ENCODE measurements at regions of chr14 and their contacts with region 1.

Region 1: DNA sequence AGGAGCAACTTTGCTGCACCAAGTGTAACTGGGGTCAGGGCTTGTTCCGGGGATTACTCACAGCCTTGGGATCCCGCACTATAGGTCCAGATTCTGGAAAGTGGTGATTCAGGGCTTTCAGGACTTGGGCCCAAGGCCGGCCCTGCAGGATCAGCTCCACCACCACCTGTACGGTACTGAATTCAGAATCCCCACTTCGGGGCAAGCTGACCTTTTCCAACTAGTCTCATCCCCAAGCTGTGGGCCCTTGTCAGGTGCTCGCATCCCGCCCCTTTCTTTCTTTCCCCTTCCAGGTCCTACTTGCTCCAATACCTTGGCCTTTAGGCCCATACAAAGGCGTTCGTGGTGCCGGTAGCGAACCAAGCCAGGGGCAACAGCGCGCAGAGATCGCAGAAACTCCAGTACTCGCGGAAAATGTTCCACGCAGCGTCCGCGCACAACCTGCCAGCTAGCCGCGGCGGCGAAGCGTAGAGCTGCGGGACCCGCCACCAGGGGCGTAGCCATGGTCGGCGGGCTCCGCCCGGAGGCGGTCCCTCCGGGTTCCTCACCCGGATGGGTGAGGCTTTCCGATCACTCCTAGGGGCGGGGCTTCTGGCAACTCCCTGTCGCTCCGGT is 487 bp downstream of the TINF2 start:
- DNase-seq: peak; percentile 93 to 94 (median 93)
- H3K4me3 ChIP-seq: peak overlapping the region; percentile 91
- H3K27ac ChIP-seq: peak overlapping the region; percentile 92 to 96
- H3K4me1 ChIP-seq: peaks cover 7% of the 10 kb centered on the region
- H3K27me3 ChIP-seq: no peaks in the 10 kb centered on the region
- CTCF ChIP-seq: peak; percentile 73 to 81 (median 79)
- EP300 ChIP-seq: no peak
- POLR2A ChIP-seq: no peak

Region 2: GRCh38 chr14:24171422-24172260 is 70.3 kb before region 1 on chr14 and contains the start of gene REC8:
- intact Hi-C with region 1: no loop called
- DNase-seq: peak; percentile 45 to 85 (median 67)
- H3K4me3 ChIP-seq: peak within 1 kb of the TSS; percentile 17
- H3K27ac ChIP-seq: no peak within 1 kb of the TSS
- H3K4me1 ChIP-seq: peaks cover 8% of the 10 kb centered on the region
- H3K27me3 ChIP-seq: no peaks in the 10 kb centered on the region
- CTCF ChIP-seq: no peak
- EP300 ChIP-seq: no peak
- POLR2A ChIP-seq: no peak
- total RNA-seq, gene REC8: 6.2 to 75.4 (median 13.5) TPM

Region 3: DNA sequence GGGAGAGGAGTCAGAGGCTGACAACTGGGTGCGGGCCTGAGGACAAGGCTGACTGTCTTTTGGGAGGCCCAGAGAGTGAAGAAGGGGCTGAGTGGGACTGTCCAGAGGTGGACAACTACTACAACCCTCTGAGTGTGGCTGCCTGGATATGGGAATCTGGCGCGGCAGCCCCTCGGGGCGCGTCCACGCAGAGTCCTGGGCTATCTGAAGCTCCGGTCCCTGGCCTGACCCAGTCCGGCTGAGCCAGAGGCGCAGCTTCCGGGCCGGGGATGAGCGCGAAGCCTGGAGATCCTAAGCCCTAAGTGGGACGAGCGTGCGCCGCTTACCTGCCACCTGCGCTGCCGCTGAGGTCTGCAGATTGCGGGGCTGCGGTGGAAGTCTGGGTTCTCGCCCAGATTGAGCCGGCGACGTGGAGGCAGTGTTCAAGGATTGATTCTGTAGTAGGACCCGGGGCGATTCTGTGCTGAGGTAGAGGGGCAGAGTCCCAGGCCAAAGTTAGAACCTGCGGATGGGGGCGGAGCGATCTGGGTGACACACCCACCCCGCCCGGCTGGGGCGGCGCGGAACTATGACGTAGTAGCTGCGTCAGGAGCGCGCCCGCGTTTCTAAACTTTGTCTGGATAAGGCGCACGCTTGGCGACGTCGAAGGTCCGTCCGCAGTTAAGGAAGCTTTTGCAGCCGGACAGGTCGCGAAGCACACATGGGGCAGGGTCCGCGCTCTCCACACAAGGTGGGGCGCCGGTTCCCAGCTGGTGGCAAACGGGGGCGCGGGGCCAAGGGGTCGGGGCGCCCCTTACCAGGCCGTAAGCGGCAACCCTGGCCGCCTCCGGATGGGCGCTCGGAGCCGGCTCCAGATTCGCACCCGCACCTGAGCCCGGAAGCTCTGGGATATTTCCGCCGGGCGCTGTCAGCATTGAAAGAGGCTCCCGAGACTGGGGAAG is 57.6 kb after region 1 on chr14 and contains the starts of genes DHRS1 and NOP9:
- intact Hi-C with region 1: loop called in 1 of 4 experiments (anchors 5 kb)
- DNase-seq: peak; percentile 87 to 96 (median 93)
- H3K4me3 ChIP-seq: peak within 1 kb of the TSS; percentile 93
- H3K27ac ChIP-seq: peak within 1 kb of the TSS; percentile 33 to 65
- H3K4me1 ChIP-seq: peaks cover 6% of the 10 kb centered on the region
- H3K27me3 ChIP-seq: no peaks in the 10 kb centered on the region
- CTCF ChIP-seq: no peak
- EP300 ChIP-seq: no peak
- POLR2A ChIP-seq: peak; percentile 76
- total RNA-seq, gene DHRS1: 16.0 to 35.6 (median 21.4) TPM
- total RNA-seq, gene NOP9: 12.0 to 28.6 (median 22.5) TPM

Region 4: DNA sequence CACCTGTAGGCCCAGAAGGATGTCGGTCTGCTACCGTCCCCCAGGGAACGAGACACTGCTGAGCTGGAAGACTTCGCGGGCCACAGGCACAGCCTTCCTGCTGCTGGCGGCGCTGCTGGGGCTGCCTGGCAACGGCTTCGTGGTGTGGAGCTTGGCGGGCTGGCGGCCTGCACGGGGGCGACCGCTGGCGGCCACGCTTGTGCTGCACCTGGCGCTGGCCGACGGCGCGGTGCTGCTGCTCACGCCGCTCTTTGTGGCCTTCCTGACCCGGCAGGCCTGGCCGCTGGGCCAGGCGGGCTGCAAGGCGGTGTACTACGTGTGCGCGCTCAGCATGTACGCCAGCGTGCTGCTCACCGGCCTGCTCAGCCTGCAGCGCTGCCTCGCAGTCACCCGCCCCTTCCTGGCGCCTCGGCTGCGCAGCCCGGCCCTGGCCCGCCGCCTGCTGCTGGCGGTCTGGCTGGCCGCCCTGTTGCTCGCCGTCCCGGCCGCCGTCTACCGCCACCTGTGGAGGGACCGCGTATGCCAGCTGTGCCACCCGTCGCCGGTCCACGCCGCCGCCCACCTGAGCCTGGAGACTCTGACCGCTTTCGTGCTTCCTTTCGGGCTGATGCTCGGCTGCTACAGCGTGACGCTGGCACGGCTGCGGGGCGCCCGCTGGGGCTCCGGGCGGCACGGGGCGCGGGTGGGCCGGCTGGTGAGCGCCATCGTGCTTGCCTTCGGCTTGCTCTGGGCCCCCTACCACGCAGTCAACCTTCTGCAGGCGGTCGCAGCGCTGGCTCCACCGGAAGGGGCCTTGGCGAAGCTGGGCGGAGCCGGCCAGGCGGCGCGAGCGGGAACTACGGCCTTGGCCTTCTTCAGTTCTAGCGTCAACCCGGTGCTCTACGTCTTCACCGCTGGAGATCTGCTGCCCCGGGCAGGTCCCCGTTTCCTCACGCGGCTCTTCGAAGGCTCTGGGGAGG is 69.0 kb after region 1 on chr14 and contains the start of gene LTB4R:
- intact Hi-C with region 1: loop called in 2 of 4 experiments (anchors 5 kb)
- DNase-seq: peak; percentile 77 to 86 (median 83)
- H3K4me3 ChIP-seq: peak within 1 kb of the TSS; percentile 40
- H3K27ac ChIP-seq: peak within 1 kb of the TSS; percentile 73 to 85
- H3K4me1 ChIP-seq: peaks cover 12% of the 10 kb centered on the region
- H3K27me3 ChIP-seq: no peaks in the 10 kb centered on the region
- CTCF ChIP-seq: peak; percentile 16 to 42 (median 27)
- EP300 ChIP-seq: no peak
- POLR2A ChIP-seq: peak; percentile 44
- total RNA-seq, gene LTB4R: 4.4 to 9.4 (median 7.7) TPM

Region 5: GRCh38 chr14:24431569-24432258 is 189.8 kb after region 1 on chr14:
- intact Hi-C with region 1: loop called in 1 of 4 experiments (anchors 5 kb)
- DNase-seq: peak; percentile 90 to 95 (median 92)
- H3K4me3 ChIP-seq: no peak overlapping the region
- H3K27ac ChIP-seq: peak overlapping the region in 1 of 2 donors; percentile 99
- H3K4me1 ChIP-seq: peaks cover 11% of the 10 kb centered on the region
- H3K27me3 ChIP-seq: no peaks in the 10 kb centered on the region
- CTCF ChIP-seq: peak; percentile 81 to 91 (median 88)
- EP300 ChIP-seq: no peak
- POLR2A ChIP-seq: no peak